ENCODE measurements at regions of chr19 and their contacts with region 1.

Region 1: GRCh38 chr19:17511724-17512573 is 500 bp downstream of the PGLS start:
- DNase-seq: peak; percentile 92
- ATAC-seq: peak; percentile 52
- H3K4me3 Mint-ChIP-seq: peak overlapping the region; percentile 95
- H3K27ac Mint-ChIP-seq: peak overlapping the region; percentile 88
- H3K4me1 Mint-ChIP-seq: peaks cover 39% of the 10 kb centered on the region
- H3K27me3 Mint-ChIP-seq: no peaks in the 10 kb centered on the region

Region 2: GRCh38 chr19:15702534-15702930 is 1809.4 kb before region 1 on chr19:
- CTCF ChIA-PET with region 1: no interaction called
- POLR2A ChIA-PET with region 1: no interaction called
- intact Hi-C with region 1: no loop called
- DNase-seq: peak; percentile 59
- ATAC-seq: peak; percentile 36
- H3K4me3 Mint-ChIP-seq: no peak overlapping the region
- H3K27ac Mint-ChIP-seq: no peak overlapping the region
- H3K4me1 Mint-ChIP-seq: no peaks in the 10 kb centered on the region
- H3K27me3 Mint-ChIP-seq: peaks cover 34% of the 10 kb centered on the region

Region 3: DNA sequence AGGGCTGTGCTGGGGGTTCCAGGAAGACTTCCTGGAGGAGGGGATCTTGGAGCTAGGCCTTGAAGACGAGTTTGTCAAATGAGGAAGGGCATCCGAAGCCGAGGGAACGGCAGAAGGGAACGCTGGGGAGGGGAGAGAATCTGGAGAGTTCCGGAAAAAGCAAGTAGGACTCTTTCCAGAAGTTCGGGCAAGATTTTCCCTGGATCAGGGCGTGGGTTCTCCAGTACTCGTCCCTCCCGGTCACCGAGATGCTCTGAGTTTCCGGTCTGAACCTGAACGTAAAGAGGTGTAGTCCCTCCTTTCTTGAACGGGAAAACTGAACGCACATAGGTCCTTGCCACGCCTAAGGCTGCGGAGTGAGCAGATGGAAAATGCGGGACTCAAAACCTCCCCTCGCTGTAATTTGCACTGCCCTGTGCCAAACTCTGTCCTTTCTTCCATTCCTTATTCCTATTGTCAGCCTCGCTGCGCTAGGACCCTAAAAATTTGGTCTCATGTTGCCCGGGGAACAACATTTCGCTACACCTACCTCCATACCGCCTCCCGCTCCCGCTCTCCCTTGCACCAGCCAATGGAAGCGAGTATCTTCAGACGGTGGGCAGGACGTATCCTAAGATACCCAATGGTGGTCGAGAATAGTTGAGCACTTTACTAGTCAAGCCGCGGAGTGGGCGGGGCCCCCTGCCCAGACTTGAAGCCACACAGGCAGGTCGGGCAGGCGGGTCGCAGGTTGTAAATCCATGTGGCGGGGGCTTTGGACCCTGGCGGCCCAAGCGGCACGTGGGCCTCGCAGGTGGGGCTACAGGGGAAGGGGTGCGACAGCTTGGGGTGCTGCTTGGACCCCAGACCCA is 174.9 kb before region 1 on chr19 and contains the start of gene GTPBP3:
- CTCF ChIA-PET with region 1: no interaction called
- POLR2A ChIA-PET with region 1: no interaction called
- intact Hi-C with region 1: loop called in 1 of 2 experiments (anchors 1 kb)
- DNase-seq: peak; percentile 98
- ATAC-seq: peak; percentile 89
- H3K4me3 Mint-ChIP-seq: peak within 1 kb of the TSS; percentile 98
- H3K27ac Mint-ChIP-seq: peak within 1 kb of the TSS; percentile 98
- H3K4me1 Mint-ChIP-seq: peaks cover 25% of the 10 kb centered on the region
- H3K27me3 Mint-ChIP-seq: no peaks in the 10 kb centered on the region
- total RNA-seq, gene GTPBP3: 37.3 to 39.8 TPM

Region 4: GRCh38 chr19:17398902-17399527 is 112.9 kb before region 1 on chr19:
- CTCF ChIA-PET with region 1: no interaction called
- POLR2A ChIA-PET with region 1: no interaction called
- intact Hi-C with region 1: no loop called
- DNase-seq: no peak
- ATAC-seq: no peak
- H3K4me3 Mint-ChIP-seq: no peak overlapping the region
- H3K27ac Mint-ChIP-seq: no peak overlapping the region
- H3K4me1 Mint-ChIP-seq: peaks cover 17% of the 10 kb centered on the region
- H3K27me3 Mint-ChIP-seq: no peaks in the 10 kb centered on the region

Region 5: DNA sequence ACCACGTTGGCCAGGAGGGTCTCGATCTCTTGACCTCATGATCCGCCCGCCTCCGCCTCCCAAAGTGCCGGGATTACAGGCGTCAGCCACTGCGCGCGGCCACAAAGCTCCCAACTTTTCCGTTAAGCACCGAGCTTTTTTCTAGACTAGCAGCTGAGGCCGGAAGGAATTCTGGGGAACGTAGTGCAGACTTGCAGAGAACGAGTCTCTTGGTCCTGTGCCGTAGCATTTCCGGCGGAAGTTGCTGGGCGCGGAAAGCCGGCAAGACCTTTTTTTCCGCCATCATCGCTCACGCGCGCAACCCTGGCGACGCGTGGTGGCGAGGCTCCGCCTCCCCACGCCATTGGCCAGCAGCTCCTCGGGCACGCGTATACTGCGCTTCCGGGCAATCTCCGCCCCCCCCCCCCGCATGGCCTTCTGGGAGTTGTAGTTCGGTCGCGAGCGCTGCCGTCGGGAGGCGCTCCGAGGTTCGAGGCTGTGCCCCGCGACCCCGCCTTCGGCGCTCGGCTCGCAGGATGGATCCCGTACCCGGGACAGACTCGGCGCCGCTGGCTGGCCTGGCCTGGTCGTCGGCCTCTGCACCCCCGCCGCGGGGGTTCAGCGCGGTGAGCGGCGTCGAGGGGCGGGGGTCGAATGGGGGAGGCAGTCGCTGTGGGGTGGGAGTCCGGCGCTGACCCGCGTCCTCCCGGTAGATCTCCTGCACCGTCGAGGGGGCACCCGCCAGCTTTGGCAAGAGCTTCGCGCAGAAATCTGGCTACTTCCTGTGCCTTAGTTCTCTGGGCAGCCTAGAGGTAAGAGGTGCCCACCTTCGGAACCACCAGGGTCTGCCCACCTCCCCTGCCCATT is 92.1 kb before region 1 on chr19 and contains the start of gene MVB12A:
- CTCF ChIA-PET with region 1: interaction called, 4 read pairs
- POLR2A ChIA-PET with region 1: no interaction called
- intact Hi-C with region 1: loop called in 1 of 2 experiments (anchors 1 kb)
- DNase-seq: peak; percentile 97
- ATAC-seq: peak; percentile 95
- H3K4me3 Mint-ChIP-seq: peak within 1 kb of the TSS; percentile 91
- H3K27ac Mint-ChIP-seq: peak within 1 kb of the TSS; percentile 87
- H3K4me1 Mint-ChIP-seq: peaks cover 11% of the 10 kb centered on the region
- H3K27me3 Mint-ChIP-seq: no peaks in the 10 kb centered on the region
- total RNA-seq, gene MVB12A: 27.6 to 32.6 TPM

Region 6: DNA sequence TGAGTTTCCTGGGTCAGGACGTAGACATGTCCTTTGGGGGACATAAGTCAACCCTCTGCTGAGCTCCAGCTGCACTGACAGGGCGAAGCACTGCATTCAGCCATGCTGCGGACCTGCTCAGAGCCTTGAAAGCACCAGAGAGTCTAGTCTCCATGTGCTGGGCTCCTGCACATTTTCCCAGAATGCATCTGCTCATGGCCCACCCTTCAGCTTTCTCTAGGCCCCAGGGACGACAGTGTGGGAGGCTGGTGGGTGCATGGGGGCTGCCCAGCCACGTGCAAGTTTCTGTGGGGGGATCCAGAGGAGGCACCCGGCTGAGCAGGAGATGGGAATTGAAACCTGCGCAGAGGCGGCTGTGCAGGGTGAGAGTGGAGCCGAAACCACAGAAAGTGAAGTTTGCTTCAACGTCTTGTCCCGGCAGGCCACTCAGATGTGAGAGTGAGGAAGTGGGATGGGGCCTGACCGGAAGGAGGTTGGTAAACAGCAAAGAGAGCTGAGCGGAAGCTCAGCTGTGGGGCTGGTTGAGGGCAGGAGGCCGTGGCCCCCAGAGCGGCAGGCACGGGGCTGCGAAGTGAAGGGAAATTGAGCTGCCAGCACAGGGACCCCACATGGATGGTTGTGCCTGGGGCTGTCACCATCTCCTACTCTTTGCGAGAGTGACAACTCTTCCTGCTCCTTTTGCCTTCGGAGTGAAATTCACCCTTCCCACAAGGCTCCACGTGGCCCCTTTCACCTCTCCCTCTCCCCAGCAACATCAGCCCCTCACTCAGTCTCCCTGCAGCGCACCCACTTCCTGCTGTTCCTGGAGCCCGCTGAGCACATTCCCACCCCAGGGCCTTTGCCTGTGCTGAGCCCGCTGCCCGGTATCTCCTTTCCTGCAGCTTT is 11.3 kb after region 1 on chr19:
- CTCF ChIA-PET with region 1: no interaction called
- POLR2A ChIA-PET with region 1: no interaction called
- intact Hi-C with region 1: no loop called
- DNase-seq: peak; percentile 77
- ATAC-seq: peak; percentile 90
- H3K4me3 Mint-ChIP-seq: peak overlapping the region; percentile 38
- H3K27ac Mint-ChIP-seq: peak overlapping the region; percentile 88
- H3K4me1 Mint-ChIP-seq: peaks cover 22% of the 10 kb centered on the region
- H3K27me3 Mint-ChIP-seq: no peaks in the 10 kb centered on the region

Region 7: DNA sequence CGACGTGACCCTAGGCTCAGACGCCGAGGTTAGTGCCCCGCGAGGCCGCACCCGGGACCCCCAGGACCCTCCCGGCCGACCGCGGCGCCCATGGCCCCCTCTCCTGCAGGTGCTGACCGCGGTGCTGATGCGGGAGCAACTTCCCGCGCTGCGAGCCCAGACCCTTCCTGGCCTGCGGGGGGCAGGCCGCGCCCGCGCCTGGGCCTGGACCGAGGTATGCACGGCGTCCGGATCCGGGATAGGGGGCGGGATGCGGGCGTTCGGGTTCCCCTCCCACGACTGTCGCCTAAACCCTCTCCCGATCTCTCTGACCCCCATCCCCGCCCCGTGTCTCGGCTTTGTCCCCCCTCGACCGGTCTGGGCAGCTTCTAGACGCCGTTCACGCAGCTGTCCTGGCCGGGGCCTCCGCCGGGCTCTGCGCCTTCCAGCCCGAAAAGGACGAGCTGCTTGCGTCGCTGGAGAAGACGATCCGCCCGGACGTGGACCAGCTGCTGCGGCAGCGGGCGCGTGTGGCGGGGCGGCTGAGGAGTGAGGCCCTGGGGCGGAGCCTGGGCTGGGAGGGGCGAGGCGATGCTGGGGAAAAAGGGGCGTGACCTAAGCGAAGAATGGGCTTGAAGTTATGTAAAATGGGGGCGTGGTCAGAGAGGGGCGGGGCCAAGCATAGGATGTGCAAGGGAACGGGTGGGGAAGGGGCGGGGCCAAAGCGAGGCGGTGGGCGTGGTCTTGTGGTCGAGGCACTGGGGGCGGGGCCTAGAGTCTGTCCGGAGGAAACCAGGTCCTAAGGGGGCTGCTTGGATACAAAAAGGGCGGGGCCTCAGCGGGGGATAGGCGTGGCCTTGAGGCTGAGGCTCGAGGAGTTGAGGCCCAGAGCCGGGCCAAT is 27.5 kb after region 1 on chr19:
- CTCF ChIA-PET with region 1: no interaction called
- POLR2A ChIA-PET with region 1: no interaction called
- intact Hi-C with region 1: loop called in 1 of 2 experiments (anchors 1 kb)
- DNase-seq: peak; percentile 99
- ATAC-seq: peak; percentile 94
- H3K4me3 Mint-ChIP-seq: peak overlapping the region; percentile 71
- H3K27ac Mint-ChIP-seq: peak overlapping the region; percentile 47
- H3K4me1 Mint-ChIP-seq: peaks cover 10% of the 10 kb centered on the region
- H3K27me3 Mint-ChIP-seq: peaks cover 6% of the 10 kb centered on the region

Region 8: GRCh38 chr19:17605761-17606745 is 94.1 kb after region 1 on chr19:
- CTCF ChIA-PET with region 1: no interaction called
- POLR2A ChIA-PET with region 1: no interaction called
- intact Hi-C with region 1: no loop called
- DNase-seq: peak; percentile 90
- ATAC-seq: peak; percentile 89
- H3K4me3 Mint-ChIP-seq: peak overlapping the region; percentile 65
- H3K27ac Mint-ChIP-seq: no peak overlapping the region
- H3K4me1 Mint-ChIP-seq: peaks cover 8% of the 10 kb centered on the region
- H3K27me3 Mint-ChIP-seq: peaks cover 29% of the 10 kb centered on the region

Region 9: GRCh38 chr19:17718947-17719711 is 207.2 kb after region 1 on chr19 and contains the start of gene MAP1S:
- CTCF ChIA-PET with region 1: no interaction called
- POLR2A ChIA-PET with region 1: no interaction called
- intact Hi-C with region 1: loop called in 1 of 2 experiments (anchors 1 kb)
- DNase-seq: peak; percentile 86
- ATAC-seq: peak; percentile 83
- H3K4me3 Mint-ChIP-seq: peak within 1 kb of the TSS; percentile 81
- H3K27ac Mint-ChIP-seq: peak within 1 kb of the TSS; percentile 88
- H3K4me1 Mint-ChIP-seq: peaks cover 35% of the 10 kb centered on the region
- H3K27me3 Mint-ChIP-seq: no peaks in the 10 kb centered on the region
- total RNA-seq, gene MAP1S: 57.6 to 79.3 TPM

Measured in activated CD4-positive, alpha-beta T cell treated with anti-CD3 and anti-CD28 coated beads for 36 hours (primary cell).